ENCODE measurements at regions of chr2 and their contacts with region 1.

Region 1: DNA sequence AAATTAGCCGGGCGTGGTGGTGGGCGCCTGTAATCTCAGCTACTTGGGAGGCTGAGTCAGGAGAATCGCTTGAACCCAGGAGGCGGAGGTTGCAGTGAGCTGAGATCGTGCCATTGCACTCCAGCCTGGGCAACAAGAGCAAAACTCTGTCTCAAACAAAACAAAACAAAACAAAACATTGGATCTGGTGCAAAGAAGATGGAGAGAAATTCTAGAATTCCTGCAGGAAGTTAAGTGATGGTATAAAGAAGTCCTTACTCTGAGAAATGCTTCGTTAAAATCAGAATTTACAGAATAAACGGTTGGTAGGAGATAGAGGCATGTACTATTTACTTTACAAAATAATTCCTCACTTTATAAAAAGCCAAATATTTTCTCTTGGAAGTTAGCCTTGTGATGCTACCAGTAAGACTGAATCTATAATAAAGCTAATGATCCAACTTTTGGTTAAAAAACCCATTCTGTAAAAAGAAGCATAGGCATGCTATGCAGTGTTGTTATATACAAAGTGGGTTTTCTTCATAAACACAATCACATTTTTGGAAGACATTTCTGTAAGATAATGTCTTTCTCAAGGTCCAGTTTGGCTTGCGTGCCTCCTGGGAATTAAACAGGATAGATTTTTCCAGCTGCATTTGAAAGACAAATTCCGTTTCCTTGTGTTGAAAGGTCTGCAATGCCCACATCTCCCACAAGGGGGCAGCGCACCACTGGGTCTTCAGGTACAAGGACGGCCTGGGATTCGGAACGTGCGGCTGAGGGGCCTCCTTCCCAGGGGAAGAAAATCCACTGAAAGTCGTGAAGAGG is 35.6 kb upstream of the PNO1 start:
- DNase-seq: peak; percentile 88
- ATAC-seq: peak; percentile 79
- H3K4me3 ChIP-seq: peak overlapping the region; percentile 28; the same call in 1 of the 2 replicates
- H3K27ac ChIP-seq: no peak overlapping the region
- H3K4me1 ChIP-seq: peaks cover 4% of the 10 kb centered on the region; the same call in 1 of the 2 replicates
- H3K27me3 ChIP-seq: no peaks in the 10 kb centered on the region
- CTCF ChIP-seq: peak; percentile 98

Region 2: DNA sequence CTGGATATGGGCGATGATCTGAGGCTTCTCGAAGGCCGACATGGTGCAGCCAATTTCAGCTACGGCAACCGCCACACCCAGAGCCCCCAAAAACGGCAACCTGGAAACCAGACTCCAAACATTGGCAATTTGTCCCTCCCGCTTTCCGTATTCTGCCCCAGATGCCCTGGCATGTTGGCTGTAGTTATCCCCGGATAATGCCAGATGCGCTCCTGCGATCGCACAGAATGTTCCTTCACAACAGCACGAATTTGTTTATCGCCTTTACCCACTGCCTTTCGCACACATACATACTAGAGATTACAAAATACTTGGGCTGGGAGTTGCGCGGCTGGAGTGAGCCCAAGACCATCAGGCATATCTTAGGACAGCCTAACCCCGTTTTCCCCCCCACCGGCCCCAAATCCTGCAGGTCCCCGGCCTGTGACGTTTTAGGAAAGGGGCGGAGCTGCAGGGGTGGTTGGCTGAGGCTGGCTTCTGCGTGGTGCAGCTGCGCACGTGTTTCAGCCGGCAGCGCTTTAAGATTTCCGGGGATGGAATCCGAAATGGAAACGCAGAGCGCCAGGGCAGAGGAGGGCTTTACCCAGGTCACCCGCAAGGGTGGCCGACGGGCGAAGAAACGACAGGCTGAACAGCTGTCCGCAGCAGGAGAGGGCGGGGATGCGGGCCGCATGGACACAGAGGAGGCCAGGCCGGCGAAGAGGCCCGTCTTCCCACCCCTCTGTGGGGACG is 35.5 kb after region 1 on chr2 and contains the start of gene PNO1:
- CTCF ChIA-PET with region 1: interaction called, 11 read pairs
- POLR2A ChIA-PET with region 1: no interaction called
- intact Hi-C with region 1: no loop called
- DNase-seq: peak; percentile 94
- ATAC-seq: peak; percentile 91
- H3K4me3 ChIP-seq: peak within 1 kb of the TSS; percentile 92
- H3K27ac ChIP-seq: peak within 1 kb of the TSS; percentile 91
- H3K4me1 ChIP-seq: peaks cover 14% of the 10 kb centered on the region
- H3K27me3 ChIP-seq: no peaks in the 10 kb centered on the region
- CTCF ChIP-seq: no peak
- total RNA-seq, gene PNO1: 50.8 and 64.1 TPM in 2 replicates

Region 3: DNA sequence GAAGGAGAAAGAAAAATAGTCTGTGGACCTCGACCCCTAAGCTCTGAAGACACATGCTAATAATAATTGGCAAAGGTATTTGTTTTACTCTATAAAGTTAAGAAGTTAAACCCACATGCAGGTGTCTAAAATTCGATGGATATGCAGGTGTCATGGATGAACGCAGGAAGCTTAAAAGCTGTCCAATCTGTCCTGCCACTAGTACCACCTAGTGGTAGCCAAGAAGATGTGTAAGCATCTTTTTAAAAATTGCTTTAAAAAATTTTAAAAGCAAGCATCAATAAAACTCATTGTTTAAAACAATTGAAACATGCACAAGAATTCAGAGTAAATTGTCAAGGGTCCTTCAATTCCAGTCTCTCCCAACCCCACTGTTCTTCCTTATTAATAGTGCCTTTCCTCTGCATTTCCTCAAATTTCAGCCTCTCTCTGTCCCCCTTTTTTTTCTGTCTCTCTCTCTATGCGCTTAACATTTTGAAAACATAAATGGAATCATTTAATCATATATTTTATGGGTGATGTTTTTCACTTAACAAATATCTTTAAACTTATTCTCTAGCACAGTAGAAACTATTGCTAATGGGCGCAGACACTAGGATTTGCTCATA is 160.8 kb after region 1 on chr2:
- CTCF ChIA-PET with region 1: interaction called, 8 read pairs
- POLR2A ChIA-PET with region 1: no interaction called
- intact Hi-C with region 1: loop called (anchors 1 kb)
- DNase-seq: peak; percentile 55
- ATAC-seq: peak; percentile 73
- H3K4me3 ChIP-seq: no peak overlapping the region
- H3K27ac ChIP-seq: no peak overlapping the region
- H3K4me1 ChIP-seq: peaks cover 21% of the 10 kb centered on the region
- H3K27me3 ChIP-seq: no peaks in the 10 kb centered on the region
- CTCF ChIP-seq: peak; percentile 86

Region 4: GRCh38 chr2:68290901-68291300 is 168.8 kb after region 1 on chr2:
- CTCF ChIA-PET with region 1: interaction called, 11 read pairs
- POLR2A ChIA-PET with region 1: no interaction called
- intact Hi-C with region 1: no loop called
- DNase-seq: no peak
- ATAC-seq: no peak
- H3K4me3 ChIP-seq: no peak overlapping the region
- H3K27ac ChIP-seq: no peak overlapping the region
- H3K4me1 ChIP-seq: no peaks in the 10 kb centered on the region; the same call in 1 of the 2 replicates
- H3K27me3 ChIP-seq: no peaks in the 10 kb centered on the region
- CTCF ChIP-seq: no peak

Region 5: GRCh38 chr2:68362069-68362468 is 240.0 kb after region 1 on chr2:
- CTCF ChIA-PET with region 1: no interaction called
- POLR2A ChIA-PET with region 1: no interaction called
- intact Hi-C with region 1: loop called (anchors 1 kb)
- DNase-seq: peak; percentile 80
- ATAC-seq: peak; percentile 73
- H3K4me3 ChIP-seq: no peak overlapping the region; the same call in 1 of the 2 replicates
- H3K27ac ChIP-seq: no peak overlapping the region
- H3K4me1 ChIP-seq: peaks cover 4% of the 10 kb centered on the region; the same call in 1 of the 2 replicates
- H3K27me3 ChIP-seq: no peaks in the 10 kb centered on the region
- CTCF ChIP-seq: peak; percentile 91

Region 6: DNA sequence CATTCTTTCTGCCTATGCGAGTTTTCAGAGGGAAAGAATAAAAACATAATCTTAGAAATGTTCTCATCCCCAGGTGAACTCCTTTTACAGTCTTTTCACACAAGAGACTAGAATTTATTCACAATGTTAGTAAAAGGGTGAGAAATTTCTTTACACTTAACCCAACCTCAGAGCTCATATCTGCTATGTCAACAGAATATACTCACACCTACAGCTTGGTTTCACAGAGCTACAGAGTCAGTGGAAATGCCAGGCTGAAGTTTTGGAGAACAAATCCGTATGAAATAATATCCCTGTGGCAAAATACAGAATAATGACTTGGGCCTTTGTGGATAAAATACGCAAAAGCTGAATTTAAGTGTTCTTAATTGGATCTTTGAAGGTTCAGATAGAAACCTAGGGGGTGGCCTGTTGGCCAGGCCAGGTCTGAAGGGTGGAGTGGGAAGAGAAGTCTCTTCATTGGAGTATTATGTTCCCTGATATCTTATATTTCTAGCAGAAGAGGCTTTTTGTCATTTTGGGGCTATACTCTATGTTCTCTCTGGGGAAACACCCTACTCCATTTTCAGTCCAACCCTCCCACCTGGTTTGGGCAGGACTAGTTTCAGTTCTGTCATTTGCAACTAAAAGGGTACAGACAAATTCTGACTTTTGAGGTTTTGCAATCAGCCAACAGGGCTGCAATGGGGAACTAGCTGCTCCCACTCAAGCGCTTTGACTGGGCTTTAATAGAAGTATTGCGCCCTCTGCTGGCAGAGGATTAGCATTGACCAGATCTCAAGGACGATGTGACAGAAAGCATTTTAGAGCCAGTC is 319.3 kb after region 1 on chr2:
- CTCF ChIA-PET with region 1: interaction called, 4 read pairs
- POLR2A ChIA-PET with region 1: no interaction called
- intact Hi-C with region 1: loop called (anchors 1 kb)
- DNase-seq: peak; percentile 91
- ATAC-seq: peak; percentile 96
- H3K4me3 ChIP-seq: no peak overlapping the region
- H3K27ac ChIP-seq: no peak overlapping the region
- H3K4me1 ChIP-seq: no peaks in the 10 kb centered on the region
- H3K27me3 ChIP-seq: no peaks in the 10 kb centered on the region
- CTCF ChIP-seq: peak; percentile 95

Region 7: GRCh38 chr2:68463287-68463877 is 341.3 kb after region 1 on chr2:
- CTCF ChIA-PET with region 1: no interaction called
- POLR2A ChIA-PET with region 1: no interaction called
- intact Hi-C with region 1: no loop called
- DNase-seq: peak; percentile 83
- ATAC-seq: no peak
- H3K4me3 ChIP-seq: no peak overlapping the region
- H3K27ac ChIP-seq: no peak overlapping the region
- H3K4me1 ChIP-seq: peaks cover 28% of the 10 kb centered on the region
- H3K27me3 ChIP-seq: no peaks in the 10 kb centered on the region
- CTCF ChIP-seq: peak; percentile 88

Region 8: DNA sequence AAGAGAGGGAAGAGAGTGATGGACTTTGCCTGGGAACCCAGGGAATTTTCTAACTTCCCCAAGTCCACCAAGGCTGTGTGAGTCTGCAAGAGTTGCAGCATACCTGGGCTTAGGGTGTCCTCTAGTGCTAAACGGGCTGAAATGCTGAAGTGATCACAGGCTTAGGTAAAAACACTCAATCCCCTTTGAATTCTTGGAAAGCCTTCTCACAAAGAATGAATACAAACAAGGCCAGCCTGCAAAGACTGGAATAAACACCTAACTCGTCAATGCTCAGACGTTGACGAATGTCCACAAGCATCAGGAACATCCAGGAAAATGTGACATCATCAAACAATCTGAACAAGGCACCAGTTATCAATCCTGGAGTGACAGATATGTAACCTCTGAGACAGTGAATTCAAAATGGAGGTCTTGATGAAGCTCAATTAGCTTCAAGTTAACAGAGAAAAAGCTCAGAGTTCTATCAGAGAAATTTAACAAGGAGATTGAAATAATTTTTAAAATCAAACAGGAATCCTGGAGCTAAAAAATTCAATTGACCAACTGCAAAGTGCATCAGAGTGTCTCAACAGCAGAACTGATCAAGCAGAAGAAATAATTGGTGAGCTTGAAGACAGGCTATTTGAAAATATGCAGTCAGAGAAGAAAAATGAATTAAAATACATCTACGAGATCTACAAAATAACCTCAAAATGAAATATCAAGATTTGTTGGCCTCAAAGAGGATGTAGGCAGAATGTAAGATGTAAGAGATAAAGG is 779.3 kb after region 1 on chr2:
- CTCF ChIA-PET with region 1: no interaction called
- POLR2A ChIA-PET with region 1: no interaction called
- intact Hi-C with region 1: no loop called
- DNase-seq: peak; percentile 16
- ATAC-seq: no peak
- H3K4me3 ChIP-seq: no peak overlapping the region
- H3K27ac ChIP-seq: no peak overlapping the region
- H3K4me1 ChIP-seq: peaks cover 11% of the 10 kb centered on the region; the same call in 1 of the 2 replicates
- H3K27me3 ChIP-seq: no peaks in the 10 kb centered on the region
- CTCF ChIP-seq: peak; percentile 43